ENCODE measurements at regions of chr5 and their contacts with region 1.

Region 1: GRCh38 chr5:11390291-11391098 is 513.8 kb downstream of the CTNND2 start:
- DNase-seq: no peak
- H3K4me3 ChIP-seq: no peak overlapping the region
- H3K27ac ChIP-seq: peak overlapping the region in 51 of 59 donors; percentile 0 to 96 (median 58)
- H3K27me3 ChIP-seq: no peaks in the 10 kb centered on the region
- CTCF ChIP-seq: peak in 2 of 56 donors; percentile 6 to 9

Region 2: DNA sequence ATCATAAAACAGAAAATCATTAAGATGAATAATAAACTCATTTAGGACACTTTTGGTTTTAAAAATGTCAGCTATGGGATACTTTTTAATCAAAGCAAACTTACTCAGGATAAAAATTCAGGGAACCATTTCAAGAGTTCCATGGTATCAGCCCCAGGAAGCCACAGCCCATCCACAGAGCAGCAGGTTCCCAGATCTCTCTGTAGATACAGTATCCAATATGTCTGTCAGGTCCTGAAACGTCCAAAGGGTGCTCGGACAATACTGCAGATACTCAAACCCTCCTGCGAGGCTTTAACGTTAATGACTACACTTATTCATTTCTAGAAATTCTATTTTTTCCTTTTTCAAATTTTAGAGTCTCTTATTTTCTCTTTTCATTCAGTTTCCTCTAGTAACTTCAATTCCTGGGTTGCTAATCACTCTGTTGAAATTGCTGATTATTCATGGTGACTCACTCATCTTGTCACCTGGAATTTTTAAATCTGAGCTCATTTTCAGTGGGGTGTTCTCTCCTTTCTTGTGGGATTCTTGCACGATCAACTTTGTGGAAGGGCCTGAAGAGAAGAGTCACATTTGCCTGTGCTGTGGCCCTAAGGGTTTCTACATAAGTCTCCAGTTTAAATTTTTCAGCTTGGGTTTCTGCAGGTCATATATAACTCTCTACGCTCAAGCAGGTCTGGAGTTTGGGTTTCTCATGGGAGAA is 78.0 kb after region 1 on chr5:
- intact Hi-C with region 1: loop called in 1 of 2 experiments (anchors 10 kb)
- DNase-seq: no peak
- H3K4me3 ChIP-seq: no peak overlapping the region
- H3K27ac ChIP-seq: peak overlapping the region in 4 of 59 donors; percentile 6 to 30 (median 10)
- H3K27me3 ChIP-seq: no peaks in the 10 kb centered on the region
- CTCF ChIP-seq: no peak

Measured in dorsolateral prefrontal cortex (tissue), 120 donors.